ENCODE measurements at regions of chr7 and their contacts with region 1.

Region 1: DNA sequence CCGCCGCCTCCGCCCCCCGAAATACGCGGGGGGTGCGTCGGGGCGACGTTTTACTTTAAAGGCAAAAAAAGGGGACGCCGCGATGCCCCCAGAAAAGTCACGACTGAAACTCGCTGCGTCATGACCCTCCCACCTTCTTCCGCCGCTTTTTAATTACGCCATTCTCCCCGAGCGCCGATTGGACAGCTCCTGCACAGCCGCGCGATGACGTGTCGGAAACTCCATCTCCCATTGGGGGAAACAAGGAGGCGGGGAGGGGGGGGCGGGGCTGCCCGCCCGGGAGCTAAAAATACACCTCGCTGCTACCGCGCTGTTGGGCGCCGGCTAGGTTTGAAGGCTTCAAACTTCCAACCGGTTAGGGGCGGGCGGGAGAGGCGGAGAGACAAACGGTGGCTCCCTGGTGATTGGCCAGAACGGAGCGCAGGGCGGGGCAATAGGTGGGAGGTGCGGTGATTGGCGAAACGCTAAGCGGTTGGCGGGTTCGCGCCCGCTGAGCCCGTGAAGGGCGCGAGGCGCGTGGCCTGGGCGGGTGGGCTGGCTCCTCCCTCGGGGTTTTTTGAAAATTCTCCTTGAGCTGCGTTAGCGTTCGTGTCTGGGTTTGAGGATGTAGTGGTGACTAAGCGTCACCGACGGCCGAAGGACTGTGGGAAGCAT is at the start of gene RHEB:
- DNase-seq: peak; percentile 98 to 99
- ATAC-seq: peak; percentile 80 to 91 (median 82)
- H3K4me3 ChIP-seq: peak within 1 kb of the TSS; percentile 72
- H3K4me3 Mint-ChIP-seq: peak within 1 kb of the TSS; percentile 94
- H3K27ac ChIP-seq: peak within 1 kb of the TSS; percentile 85
- H3K27ac Mint-ChIP-seq: peak within 1 kb of the TSS; percentile 92 to 93
- H3K4me1 ChIP-seq: peaks cover 27% of the 10 kb centered on the region
- H3K4me1 Mint-ChIP-seq: peaks cover 42 to 43% of the 10 kb centered on the region in 2 donors
- H3K27me3 ChIP-seq: no peaks in the 10 kb centered on the region
- H3K27me3 Mint-ChIP-seq: peaks cover 0 to 10% of the 10 kb centered on the region in 2 donors
- CTCF ChIP-seq: no peak
- total RNA-seq, gene RHEB: 51.0 to 63.3 (median 63.3) TPM

Region 2: DNA sequence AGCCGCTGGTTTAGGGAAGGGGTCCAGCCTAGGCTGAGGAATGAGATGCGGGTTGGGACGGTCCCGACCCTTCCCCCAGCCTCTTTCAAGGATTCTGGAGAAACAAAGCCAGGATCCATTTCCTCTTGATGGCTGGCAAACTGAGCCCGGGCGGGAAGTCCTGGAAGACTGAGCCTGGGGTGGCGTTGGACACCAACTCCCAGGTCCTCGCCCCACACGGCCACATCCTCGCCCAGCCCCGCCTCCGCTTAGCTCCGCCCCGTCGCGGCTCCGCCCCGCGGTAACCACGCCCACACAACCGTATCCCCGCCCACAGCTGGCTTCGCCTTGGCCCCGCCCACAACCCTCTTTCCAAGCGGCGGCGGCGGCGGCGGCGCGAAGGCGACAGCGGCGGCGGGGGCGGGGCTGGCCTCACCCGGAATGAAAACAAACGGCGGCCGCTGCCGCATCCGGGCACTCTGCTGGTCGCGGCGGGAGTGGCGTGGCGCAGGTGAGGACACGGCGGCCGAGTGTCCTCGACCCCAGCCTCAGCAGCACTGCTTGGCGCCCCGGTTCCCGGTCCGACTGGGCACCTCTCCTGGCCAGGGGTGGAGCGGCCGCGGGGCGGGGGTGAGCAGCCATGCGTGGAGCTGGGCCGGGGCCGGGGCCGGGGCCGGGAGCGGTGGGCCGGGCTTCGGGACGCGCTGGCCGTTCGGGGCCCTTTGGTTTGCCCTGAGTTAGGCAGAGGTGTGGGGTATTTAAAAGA is 178.4 kb before region 1 on chr7 and contains the start of gene NUB1:
- intact Hi-C with region 1: loop called (anchors 10 kb)
- DNase-seq: peak; percentile 93 to 97
- ATAC-seq: peak; percentile 91 to 98 (median 93)
- H3K4me3 ChIP-seq: peak within 1 kb of the TSS; percentile 95
- H3K4me3 Mint-ChIP-seq: peak within 1 kb of the TSS; percentile 95
- H3K27ac ChIP-seq: peak within 1 kb of the TSS; percentile 91
- H3K27ac Mint-ChIP-seq: peak within 1 kb of the TSS; percentile 91 to 96
- H3K4me1 ChIP-seq: peaks cover 27% of the 10 kb centered on the region
- H3K4me1 Mint-ChIP-seq: peaks cover 14 to 25% of the 10 kb centered on the region in 2 donors
- H3K27me3 ChIP-seq: no peaks in the 10 kb centered on the region
- H3K27me3 Mint-ChIP-seq: no peaks in the 10 kb centered on the region
- CTCF ChIP-seq: no peak
- total RNA-seq, gene NUB1: 110 to 113 (median 111) TPM

Region 3: DNA sequence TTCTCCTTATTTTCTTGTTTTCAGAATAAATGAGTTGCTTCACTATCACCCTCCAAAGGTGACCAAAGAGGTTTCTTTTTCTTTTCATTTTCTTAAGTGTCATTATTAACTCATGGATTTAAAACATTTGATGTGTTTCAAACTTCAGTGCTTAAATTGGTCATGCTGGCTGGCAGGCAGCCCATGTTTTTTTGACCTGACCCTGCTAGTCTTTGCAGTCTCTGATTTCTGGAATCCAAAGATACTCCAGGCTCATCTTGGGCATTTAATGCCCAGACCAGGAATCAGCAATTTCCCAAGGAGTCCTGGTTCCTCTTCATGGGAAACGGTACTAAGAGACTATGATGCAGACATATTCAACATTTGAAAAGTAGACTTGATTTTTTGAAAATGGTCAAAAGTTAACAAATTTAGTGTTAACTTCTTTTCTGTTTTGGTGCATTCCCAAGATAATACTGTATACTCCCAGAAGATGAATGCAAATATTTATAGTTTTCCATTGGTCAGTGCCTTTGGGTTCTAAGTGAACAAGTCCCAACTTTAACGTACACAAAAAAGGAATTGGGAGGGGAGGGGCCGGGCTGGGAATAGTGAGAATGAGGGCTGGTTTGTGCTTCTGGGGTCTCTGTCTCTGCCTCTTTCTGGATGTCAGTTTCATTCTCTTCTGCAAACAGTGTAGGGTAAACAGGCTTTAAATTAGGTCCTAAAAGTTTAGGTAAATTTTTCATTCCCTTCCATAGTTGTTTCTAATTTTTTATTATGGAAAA is 158.5 kb before region 1 on chr7:
- intact Hi-C with region 1: no loop called
- DNase-seq: no peak
- ATAC-seq: no peak
- H3K4me3 ChIP-seq: no peak overlapping the region
- H3K4me3 Mint-ChIP-seq: no peak overlapping the region
- H3K27ac ChIP-seq: no peak overlapping the region
- H3K27ac Mint-ChIP-seq: no peak overlapping the region
- H3K4me1 ChIP-seq: no peaks in the 10 kb centered on the region
- H3K4me1 Mint-ChIP-seq: peaks cover 0 to 8% of the 10 kb centered on the region in 2 donors
- H3K27me3 ChIP-seq: no peaks in the 10 kb centered on the region
- H3K27me3 Mint-ChIP-seq: no peaks in the 10 kb centered on the region
- CTCF ChIP-seq: no peak

Region 4: DNA sequence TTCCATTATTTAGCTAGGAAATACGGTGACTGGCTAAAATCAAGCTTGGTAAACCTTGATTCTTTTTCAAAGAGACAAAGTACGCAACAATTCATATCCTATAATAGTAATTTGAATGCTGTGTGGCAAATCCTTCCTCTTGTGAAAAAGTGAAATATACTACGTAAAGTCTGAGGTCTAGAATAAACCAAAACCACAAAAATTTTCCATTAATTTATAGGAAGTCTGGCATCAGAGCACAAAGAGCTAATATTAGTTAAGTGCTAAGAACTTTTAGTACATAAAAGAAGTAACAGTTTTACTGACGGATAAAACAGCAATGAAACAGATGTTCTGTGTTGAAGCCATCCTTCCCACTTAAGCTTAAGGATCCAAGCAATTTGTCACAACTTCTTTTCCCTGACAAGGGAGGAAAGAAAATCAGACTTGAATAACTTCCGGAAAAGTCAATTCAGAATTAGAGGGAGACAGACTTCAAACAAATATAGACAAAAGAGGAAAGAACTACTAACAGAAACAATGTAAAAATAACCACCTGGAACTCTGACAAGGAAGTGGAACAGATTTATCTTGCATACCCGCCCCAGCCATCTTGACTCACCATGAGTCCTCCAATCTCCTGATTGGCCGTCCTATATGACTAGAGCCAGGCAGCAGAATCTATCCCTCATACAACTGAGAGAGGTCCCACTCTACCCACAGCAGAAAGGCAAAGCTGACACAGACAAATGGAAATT is 34.8 kb before region 1 on chr7:
- intact Hi-C with region 1: loop called (anchors 5 kb)
- DNase-seq: no peak
- ATAC-seq: no peak
- H3K4me3 ChIP-seq: no peak overlapping the region
- H3K4me3 Mint-ChIP-seq: no peak overlapping the region
- H3K27ac ChIP-seq: no peak overlapping the region
- H3K27ac Mint-ChIP-seq: peak overlapping the region; percentile 16 to 60
- H3K4me1 ChIP-seq: no peaks in the 10 kb centered on the region
- H3K4me1 Mint-ChIP-seq: peaks cover 45 to 52% of the 10 kb centered on the region in 2 donors
- H3K27me3 ChIP-seq: no peaks in the 10 kb centered on the region
- H3K27me3 Mint-ChIP-seq: no peaks in the 10 kb centered on the region
- CTCF ChIP-seq: no peak

Region 5: GRCh38 chr7:151505433-151505832 is 14.5 kb before region 1 on chr7:
- intact Hi-C with region 1: loop called (anchors 1 kb)
- DNase-seq: no peak
- ATAC-seq: peak in 2 of 3 donors; percentile 31 to 32
- H3K4me3 ChIP-seq: no peak overlapping the region
- H3K4me3 Mint-ChIP-seq: no peak overlapping the region
- H3K27ac ChIP-seq: no peak overlapping the region
- H3K27ac Mint-ChIP-seq: peak overlapping the region in 1 of 2 donors; percentile 61
- H3K4me1 ChIP-seq: peaks cover 4% of the 10 kb centered on the region
- H3K4me1 Mint-ChIP-seq: peaks cover 69% of the 10 kb centered on the region in 2 donors
- H3K27me3 ChIP-seq: no peaks in the 10 kb centered on the region
- H3K27me3 Mint-ChIP-seq: no peaks in the 10 kb centered on the region
- CTCF ChIP-seq: no peak

Region 6: GRCh38 chr7:151631968-151632749 is 112.3 kb after region 1 on chr7:
- intact Hi-C with region 1: loop called (anchors 1 kb)
- DNase-seq: peak; percentile 90 to 94
- ATAC-seq: peak; percentile 78 to 89 (median 81)
- H3K4me3 ChIP-seq: peak overlapping the region; percentile 70
- H3K4me3 Mint-ChIP-seq: peak overlapping the region; percentile 99
- H3K27ac ChIP-seq: peak overlapping the region; percentile 79
- H3K27ac Mint-ChIP-seq: peak overlapping the region; percentile 93 to 96
- H3K4me1 ChIP-seq: peaks cover 10% of the 10 kb centered on the region
- H3K4me1 Mint-ChIP-seq: peaks cover 24 to 31% of the 10 kb centered on the region in 2 donors
- H3K27me3 ChIP-seq: no peaks in the 10 kb centered on the region
- H3K27me3 Mint-ChIP-seq: no peaks in the 10 kb centered on the region
- CTCF ChIP-seq: peak; percentile 51

Region 7: GRCh38 chr7:152025077-152025936 is 505.4 kb after region 1 on chr7 and contains the start of gene GALNT11:
- intact Hi-C with region 1: loop called (anchors 5 kb)
- DNase-seq: peak; percentile 95
- ATAC-seq: peak; percentile 88 to 97 (median 90)
- H3K4me3 ChIP-seq: peak within 1 kb of the TSS; percentile 88
- H3K4me3 Mint-ChIP-seq: peak within 1 kb of the TSS; percentile 88
- H3K27ac ChIP-seq: peak within 1 kb of the TSS; percentile 93
- H3K27ac Mint-ChIP-seq: peak within 1 kb of the TSS; percentile 96 to 98
- H3K4me1 ChIP-seq: peaks cover 42% of the 10 kb centered on the region
- H3K4me1 Mint-ChIP-seq: peaks cover 33 to 45% of the 10 kb centered on the region in 2 donors
- H3K27me3 ChIP-seq: no peaks in the 10 kb centered on the region
- H3K27me3 Mint-ChIP-seq: peaks cover 3 to 4% of the 10 kb centered on the region in 2 donors
- CTCF ChIP-seq: no peak
- total RNA-seq, gene GALNT11: 31.7 to 50.2 (median 44.0) TPM